ENCODE measurements at regions of chr6 and their contacts with region 1.

Region 1: DNA sequence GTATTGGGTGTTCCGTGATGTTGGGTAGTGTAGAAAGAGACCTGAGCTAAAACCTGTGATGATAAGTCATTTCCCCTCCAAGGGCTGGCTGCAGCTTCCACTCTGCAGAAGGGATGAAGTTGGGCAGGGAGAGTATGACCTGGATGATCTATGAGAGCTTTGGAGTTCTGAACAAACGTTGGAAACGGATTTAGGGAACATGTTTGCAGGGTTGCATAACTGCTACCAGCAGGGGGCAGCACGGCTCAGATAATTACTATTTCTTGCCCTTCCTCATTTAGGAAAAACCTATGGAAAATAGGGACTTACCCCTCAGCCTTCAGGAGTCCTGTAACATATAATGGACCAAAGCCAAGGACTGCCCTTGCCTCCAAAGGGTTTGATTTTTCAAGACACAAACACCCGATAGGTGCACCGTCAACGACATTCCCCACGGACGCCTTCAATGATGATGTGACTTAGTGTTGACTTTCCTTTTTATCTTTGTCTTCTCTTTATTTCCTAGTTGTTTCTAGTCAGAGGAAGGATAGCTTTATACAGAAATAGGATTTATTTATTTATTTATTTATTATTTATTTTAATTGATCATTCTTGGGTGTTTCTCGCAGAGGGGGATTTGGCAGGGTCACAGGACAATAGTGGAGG is 164.9 kb upstream of the SASH1 start:
- DNase-seq: peak; percentile 5
- H3K4me3 ChIP-seq: no peak overlapping the region
- CTCF ChIP-seq: peak; percentile 61

Region 2: GRCh38 chr6:148107911-148108310 is 69.8 kb before region 1 on chr6:
- CTCF ChIA-PET with region 1: no interaction called
- POLR2A ChIA-PET with region 1: no interaction called
- DNase-seq: no peak
- H3K4me3 ChIP-seq: no peak overlapping the region
- CTCF ChIP-seq: no peak

Region 3: DNA sequence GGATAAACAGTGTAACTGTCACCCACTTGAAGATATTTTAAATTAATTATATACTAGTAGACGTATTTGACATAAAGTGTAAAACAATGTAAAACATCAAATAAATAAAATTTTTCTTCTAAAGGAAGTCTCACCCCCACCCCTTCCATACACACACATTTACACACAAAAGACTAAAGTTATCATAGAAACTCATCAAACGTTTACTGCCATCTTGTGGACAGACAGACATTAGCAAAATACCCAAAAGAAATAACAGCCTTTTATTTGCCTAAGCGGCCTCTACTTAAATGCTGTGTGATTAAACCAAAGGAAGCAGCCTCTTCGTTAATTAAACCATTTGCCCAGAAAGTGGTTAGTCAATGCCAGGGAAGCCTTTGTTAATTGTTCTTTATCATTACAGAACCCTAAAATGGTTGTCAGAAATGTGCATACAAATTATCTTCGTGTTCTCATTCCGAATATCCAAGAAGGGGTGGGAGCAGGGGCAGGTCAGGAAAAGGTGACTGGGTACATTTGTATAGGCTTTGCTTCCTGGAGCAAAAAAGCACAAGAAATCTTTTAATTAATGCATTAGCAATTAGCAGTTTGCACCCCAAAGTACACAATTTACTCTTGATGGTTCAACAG is 11.3 kb before region 1 on chr6:
- CTCF ChIA-PET with region 1: interaction called, 27 read pairs
- POLR2A ChIA-PET with region 1: no interaction called
- DNase-seq: peak; percentile 19
- H3K4me3 ChIP-seq: no peak overlapping the region
- CTCF ChIP-seq: peak; percentile 31

Region 4: GRCh38 chr6:148231572-148231971 is 53.9 kb after region 1 on chr6:
- CTCF ChIA-PET with region 1: interaction called, 20 read pairs
- POLR2A ChIA-PET with region 1: no interaction called
- DNase-seq: peak; percentile 57
- H3K4me3 ChIP-seq: no peak overlapping the region
- CTCF ChIP-seq: no peak

Region 5: DNA sequence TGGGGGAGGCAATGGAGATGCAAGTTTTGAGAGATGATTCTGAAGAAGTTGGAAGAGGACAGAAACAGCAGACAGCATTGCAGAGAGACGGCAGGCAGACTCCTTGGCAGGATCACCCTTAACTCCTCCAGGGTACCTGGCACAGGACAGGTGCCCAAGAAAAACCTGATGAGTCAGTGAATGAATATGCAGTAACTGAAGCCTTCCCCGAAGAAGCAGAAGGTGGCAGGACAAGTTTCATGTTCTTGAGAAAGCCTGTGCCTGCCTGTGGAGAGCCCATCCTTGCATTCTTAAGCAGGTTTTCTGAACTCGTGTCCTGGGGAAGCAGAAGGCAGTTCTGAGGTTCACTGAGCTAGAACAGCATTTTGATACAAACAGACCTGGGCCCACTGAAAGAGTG is 85.3 kb after region 1 on chr6:
- CTCF ChIA-PET with region 1: interaction called, 18 read pairs
- POLR2A ChIA-PET with region 1: no interaction called
- DNase-seq: no peak
- H3K4me3 ChIP-seq: no peak overlapping the region
- CTCF ChIP-seq: no peak

Region 6: DNA sequence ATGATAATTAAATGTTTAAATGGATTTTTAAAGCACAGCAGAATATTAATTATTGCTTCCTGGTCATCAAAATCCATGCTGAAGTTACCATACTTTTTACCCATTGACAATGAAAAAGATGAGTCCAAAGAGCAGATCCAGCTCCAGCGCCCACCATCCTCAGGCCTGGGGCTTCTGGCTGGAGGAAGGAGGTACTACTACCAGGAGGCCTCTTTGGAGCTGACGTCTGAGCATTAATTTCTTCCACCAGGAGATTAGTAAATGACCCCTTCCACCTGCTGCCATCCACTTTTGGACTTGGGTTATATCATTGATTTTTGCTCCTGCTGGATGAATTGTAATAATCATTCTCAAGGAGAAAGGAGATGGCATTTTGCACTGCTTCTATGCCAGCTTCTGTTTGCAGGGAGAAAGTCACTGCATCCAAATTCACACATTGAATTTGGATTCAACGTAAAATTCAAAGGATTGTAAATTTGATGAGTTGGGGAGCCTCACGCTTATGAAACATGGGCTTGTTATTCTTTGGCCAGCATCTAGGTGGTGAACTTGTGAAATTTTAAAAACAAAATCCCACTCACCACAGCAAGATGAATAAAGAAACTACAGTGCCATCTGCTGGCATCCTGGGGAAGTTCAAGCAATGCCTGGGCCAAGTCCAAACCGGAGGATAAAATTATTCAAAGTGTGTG is 286.8 kb after region 1 on chr6:
- CTCF ChIA-PET with region 1: interaction called, 48 read pairs
- POLR2A ChIA-PET with region 1: no interaction called
- DNase-seq: peak; percentile 37
- H3K4me3 ChIP-seq: no peak overlapping the region
- CTCF ChIP-seq: peak; percentile 66

Measured in AG04449 (cell line).